Caco-2 (cell line): ENCODE measurements at regions of chr10 and their contacts with region 1.

Region 1: DNA sequence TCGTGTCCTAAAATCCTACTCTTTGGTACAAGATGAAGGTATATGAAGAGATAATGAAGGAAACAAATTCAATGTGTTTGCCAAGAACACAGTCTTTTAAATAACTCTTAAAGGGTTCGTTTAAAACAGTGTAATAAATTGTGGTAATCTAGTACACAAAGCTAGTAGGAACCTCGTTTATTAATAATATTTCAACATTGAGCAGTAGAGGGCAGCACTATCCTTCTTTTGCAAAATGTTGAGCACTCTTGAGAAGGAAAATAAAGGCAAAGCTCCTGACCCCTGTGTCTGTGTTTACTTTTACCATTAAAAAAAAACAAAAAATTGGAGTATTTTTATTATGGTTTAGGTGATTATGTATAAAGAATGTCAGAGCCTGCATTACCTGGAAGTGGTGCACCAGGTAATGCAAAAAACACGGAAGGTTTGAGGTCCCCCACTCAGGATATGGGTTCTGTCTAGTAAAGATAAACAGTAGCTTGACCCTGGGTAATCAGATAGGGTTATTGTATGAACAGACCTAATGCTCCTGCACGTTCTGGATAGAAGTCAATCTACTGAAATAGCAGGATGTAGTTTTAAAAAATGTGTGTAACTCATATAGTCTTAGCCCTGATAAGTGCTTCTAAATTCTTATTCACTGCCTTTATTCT is 5.7 kb upstream of the GOT1 start:
- DNase-seq: peak in 1 of 2 experiments; percentile 60
- H3K4me3 ChIP-seq: no peak overlapping the region
- H3K4me3 Mint-ChIP-seq: no peak overlapping the region
- H3K27ac Mint-ChIP-seq: no peak overlapping the region
- H3K4me1 ChIP-seq: no peaks in the 10 kb centered on the region
- H3K4me1 Mint-ChIP-seq: no peaks in the 10 kb centered on the region
- H3K27me3 ChIP-seq: no peaks in the 10 kb centered on the region
- H3K27me3 Mint-ChIP-seq: no peaks in the 10 kb centered on the region
- CTCF ChIP-seq: peak; percentile 32 to 49

Region 2: DNA sequence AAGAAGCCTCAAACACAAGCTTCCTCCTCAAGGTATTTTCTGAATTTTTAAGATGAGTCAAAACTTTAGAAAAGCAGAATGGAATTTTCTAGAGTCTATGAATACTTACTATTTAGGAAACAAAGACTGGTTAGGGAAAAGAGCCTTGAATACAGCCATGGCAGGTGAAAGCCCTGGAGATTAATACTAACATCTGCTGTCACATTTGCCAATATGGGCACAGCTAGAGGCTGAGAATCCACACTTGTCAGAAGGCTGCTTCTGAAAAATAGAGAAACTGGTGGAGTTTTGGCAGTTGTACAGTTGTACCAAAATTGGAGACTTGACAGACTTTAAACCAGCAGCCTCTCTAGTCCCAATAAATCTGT is 131.3 kb before region 1 on chr10:
- CTCF ChIA-PET with region 1: no interaction called
- POLR2A ChIA-PET with region 1: no interaction called
- intact Hi-C with region 1: no loop called
- DNase-seq: no peak
- H3K4me3 ChIP-seq: no peak overlapping the region
- H3K4me3 Mint-ChIP-seq: peak overlapping the region; percentile 5
- H3K27ac Mint-ChIP-seq: peak overlapping the region; percentile 27
- H3K4me1 ChIP-seq: peaks cover 20% of the 10 kb centered on the region
- H3K4me1 Mint-ChIP-seq: peaks cover 6% of the 10 kb centered on the region
- H3K27me3 ChIP-seq: no peaks in the 10 kb centered on the region
- H3K27me3 Mint-ChIP-seq: no peaks in the 10 kb centered on the region
- CTCF ChIP-seq: no peak

Region 3: DNA sequence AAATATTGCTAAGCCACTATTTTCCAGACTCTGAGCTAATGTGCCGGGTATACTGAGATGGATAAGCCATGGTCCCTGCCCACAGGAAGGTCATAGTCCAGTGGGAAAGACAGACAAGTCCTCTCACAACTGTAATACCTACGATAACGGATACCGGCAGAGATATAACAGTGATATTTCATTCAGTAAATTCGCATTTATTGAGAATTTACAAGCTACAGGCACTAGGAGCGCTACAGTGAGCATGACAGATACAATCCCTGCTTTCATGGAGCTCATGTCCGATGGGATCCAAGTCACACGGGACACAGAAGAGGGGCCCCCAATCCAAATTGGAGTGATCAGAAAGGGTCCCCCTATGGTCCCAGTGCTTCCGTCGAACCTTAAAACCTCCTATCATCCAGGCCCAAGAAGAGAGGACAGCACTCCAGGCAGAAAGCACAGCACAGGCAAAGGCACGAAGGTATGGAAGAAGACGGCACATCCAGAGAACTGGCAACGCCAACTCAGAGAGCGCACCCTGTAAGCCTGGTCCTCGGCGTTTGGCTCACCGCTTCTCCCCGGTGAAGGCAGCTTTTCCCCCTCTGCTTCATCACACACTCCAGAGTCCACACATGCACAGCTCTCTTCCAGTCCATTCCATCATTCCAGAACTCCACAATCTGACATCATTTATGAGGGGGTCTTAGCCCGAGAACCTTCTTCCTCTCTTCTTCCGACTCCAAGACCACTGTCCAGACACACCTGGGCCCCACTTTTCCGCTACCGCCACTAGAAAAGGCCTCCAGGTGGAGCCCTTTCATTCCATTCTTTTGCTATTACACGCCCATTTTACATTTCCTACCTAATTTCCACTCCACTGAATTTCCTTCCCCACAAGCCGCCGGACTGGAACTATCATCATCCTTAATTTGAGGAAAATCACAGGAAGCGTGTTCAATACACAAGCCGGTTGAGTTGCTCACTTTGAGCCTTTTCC is 48.8 kb after region 1 on chr10:
- CTCF ChIA-PET with region 1: interaction called, 11 read pairs
- POLR2A ChIA-PET with region 1: no interaction called
- intact Hi-C with region 1: no loop called
- DNase-seq: peak; percentile 43 to 58
- H3K4me3 ChIP-seq: no peak overlapping the region
- H3K4me3 Mint-ChIP-seq: no peak overlapping the region
- H3K27ac Mint-ChIP-seq: no peak overlapping the region
- H3K4me1 ChIP-seq: no peaks in the 10 kb centered on the region
- H3K4me1 Mint-ChIP-seq: peaks cover 7% of the 10 kb centered on the region
- H3K27me3 ChIP-seq: no peaks in the 10 kb centered on the region; the same call in 1 of the 2 replicates
- H3K27me3 Mint-ChIP-seq: peaks cover 20% of the 10 kb centered on the region
- CTCF ChIP-seq: peak; percentile 74 to 83

Region 4: DNA sequence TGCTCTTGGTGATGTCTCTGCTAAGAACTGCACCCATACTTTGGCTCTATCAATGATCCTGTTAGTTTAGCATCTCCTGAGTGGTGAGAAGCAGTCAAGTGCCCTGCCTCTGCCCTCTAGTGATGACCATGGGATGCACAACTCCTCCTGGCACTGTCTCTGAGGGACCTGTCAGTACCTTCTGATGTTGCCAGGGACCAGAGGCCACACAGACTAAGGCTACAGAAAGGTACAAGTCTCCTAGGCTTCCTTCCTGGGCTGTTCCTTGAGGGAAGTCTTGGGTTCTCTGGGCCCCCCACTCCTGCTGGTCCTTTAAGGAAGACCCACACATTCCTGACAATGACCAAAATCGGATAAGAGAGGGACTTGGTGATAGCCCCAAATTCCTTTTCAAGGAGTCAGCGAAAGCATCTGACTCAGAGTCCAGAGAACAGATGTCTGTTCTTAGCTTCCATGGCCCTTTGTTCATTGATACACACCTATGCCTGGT is 112.0 kb after region 1 on chr10:
- CTCF ChIA-PET with region 1: interaction called, 12 read pairs
- POLR2A ChIA-PET with region 1: no interaction called
- intact Hi-C with region 1: loop called (anchors 1 kb)
- DNase-seq: peak in 1 of 2 experiments; percentile 53
- H3K4me3 ChIP-seq: no peak overlapping the region
- H3K4me3 Mint-ChIP-seq: no peak overlapping the region
- H3K27ac Mint-ChIP-seq: no peak overlapping the region
- H3K4me1 ChIP-seq: peaks cover 13% of the 10 kb centered on the region
- H3K4me1 Mint-ChIP-seq: peaks cover 7% of the 10 kb centered on the region
- H3K27me3 ChIP-seq: no peaks in the 10 kb centered on the region
- H3K27me3 Mint-ChIP-seq: no peaks in the 10 kb centered on the region
- CTCF ChIP-seq: peak; percentile 21 to 63

Region 5: DNA sequence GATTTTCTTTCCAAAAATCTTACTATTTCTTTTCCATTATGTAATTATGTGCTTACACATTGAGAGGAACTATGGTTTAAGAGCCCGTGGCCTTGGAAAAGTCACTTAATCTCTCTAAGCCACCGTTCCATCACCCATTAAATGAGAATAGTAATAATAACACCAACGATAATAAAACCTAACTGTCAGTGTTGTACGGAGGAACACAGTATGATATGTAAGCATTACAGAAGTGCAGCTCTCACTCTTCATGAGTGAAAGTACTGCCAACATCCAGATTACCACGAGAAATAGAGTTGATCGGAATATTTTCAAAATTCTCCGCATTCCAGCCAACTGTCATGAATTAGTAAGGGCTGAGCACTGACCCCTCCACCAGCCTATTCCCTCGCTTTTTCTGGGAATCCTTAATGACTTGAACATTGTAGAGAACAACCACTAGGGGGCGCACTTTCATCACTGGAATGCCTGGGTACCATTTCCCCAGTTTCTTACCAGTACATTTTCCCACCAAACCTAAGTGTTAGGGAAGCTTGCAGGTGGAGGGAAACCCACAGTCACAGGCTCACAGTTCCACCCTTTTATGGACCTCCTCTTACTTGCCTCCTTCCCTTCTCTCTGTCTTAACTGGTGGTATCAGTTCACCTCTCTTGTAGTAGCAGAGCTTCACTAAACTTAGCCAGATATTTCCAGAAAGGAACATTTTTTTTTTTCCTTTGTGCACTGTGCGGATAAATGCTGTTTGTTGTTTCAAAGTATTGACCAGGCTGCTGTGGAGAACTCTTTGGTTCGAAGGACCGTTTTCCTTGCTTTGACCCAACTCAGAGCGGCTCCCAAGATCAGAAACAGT is 124.4 kb after region 1 on chr10:
- CTCF ChIA-PET with region 1: interaction called, 3 read pairs
- POLR2A ChIA-PET with region 1: no interaction called
- intact Hi-C with region 1: loop called (anchors 1 kb)
- DNase-seq: peak; percentile 70 to 80
- H3K4me3 ChIP-seq: no peak overlapping the region
- H3K4me3 Mint-ChIP-seq: no peak overlapping the region
- H3K27ac Mint-ChIP-seq: no peak overlapping the region
- H3K4me1 ChIP-seq: peaks cover 7% of the 10 kb centered on the region; the same call in 1 of the 2 replicates
- H3K4me1 Mint-ChIP-seq: no peaks in the 10 kb centered on the region
- H3K27me3 ChIP-seq: no peaks in the 10 kb centered on the region
- H3K27me3 Mint-ChIP-seq: no peaks in the 10 kb centered on the region
- CTCF ChIP-seq: peak; percentile 81 to 87

Region 6: DNA sequence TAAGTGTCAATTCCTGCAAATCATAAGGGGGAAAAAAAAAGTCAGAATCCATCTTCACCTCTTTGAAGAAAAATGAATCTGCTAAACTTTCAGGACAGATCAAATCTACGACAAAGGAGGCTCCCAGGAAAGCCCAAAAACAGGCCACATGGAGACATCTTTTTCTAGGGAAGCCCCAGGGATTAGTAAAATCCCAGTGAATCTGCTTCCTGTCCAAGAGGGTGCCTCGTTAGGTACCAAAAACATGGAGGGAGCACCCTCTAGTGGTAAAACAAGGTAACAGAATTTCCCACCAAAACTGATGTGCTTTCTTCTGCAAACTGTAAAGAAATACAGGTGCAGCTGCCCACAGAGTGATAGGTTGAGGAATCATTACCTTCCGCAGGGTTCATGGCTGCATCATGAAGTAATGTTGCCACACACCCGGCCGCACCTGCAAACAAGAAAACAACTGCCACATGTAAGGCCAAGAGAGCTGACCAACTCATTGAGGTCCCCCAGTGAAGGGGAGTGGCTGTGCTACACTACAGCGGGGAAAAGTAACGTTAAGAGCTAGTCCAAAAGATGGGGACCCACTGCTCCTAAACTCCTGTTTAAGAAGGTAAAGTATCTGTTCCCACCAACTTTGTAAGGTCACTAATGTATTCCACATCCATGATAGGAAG is 176.2 kb after region 1 on chr10:
- CTCF ChIA-PET with region 1: interaction called, 12 read pairs
- POLR2A ChIA-PET with region 1: interaction called, 3 read pairs
- intact Hi-C with region 1: loop called (anchors 1 kb)
- DNase-seq: peak in 1 of 2 experiments; percentile 76
- H3K4me3 ChIP-seq: no peak overlapping the region
- H3K4me3 Mint-ChIP-seq: no peak overlapping the region
- H3K27ac Mint-ChIP-seq: no peak overlapping the region
- H3K4me1 ChIP-seq: no peaks in the 10 kb centered on the region
- H3K4me1 Mint-ChIP-seq: no peaks in the 10 kb centered on the region
- H3K27me3 ChIP-seq: no peaks in the 10 kb centered on the region
- H3K27me3 Mint-ChIP-seq: no peaks in the 10 kb centered on the region
- CTCF ChIP-seq: peak; percentile 77 to 81

Region 7: GRCh38 chr10:99732033-99732912 is 296.2 kb after region 1 on chr10 and contains the starts of genes COX15 and CUTC:
- CTCF ChIA-PET with region 1: no interaction called
- POLR2A ChIA-PET with region 1: interaction called, 11 read pairs
- intact Hi-C with region 1: no loop called
- DNase-seq: peak; percentile 97 to 98
- H3K4me3 ChIP-seq: peak within 1 kb of the TSS; percentile 98
- H3K4me3 Mint-ChIP-seq: peak within 1 kb of the TSS; percentile 96
- H3K27ac Mint-ChIP-seq: peak within 1 kb of the TSS; percentile 97
- H3K4me1 ChIP-seq: no peaks in the 10 kb centered on the region; the same call in 1 of the 2 replicates
- H3K4me1 Mint-ChIP-seq: peaks cover 13% of the 10 kb centered on the region
- H3K27me3 ChIP-seq: no peaks in the 10 kb centered on the region
- H3K27me3 Mint-ChIP-seq: no peaks in the 10 kb centered on the region
- CTCF ChIP-seq: peak; percentile 61 to 69
- total RNA-seq, gene COX15: 47.6 and 50.2 TPM in 2 replicates
- total RNA-seq, gene CUTC: 27.6 and 30.1 TPM in 2 replicates